Endothelial cell of umbilical vein (primary cell): ENCODE measurements at regions of chr20 and their contacts with region 1.

Region 1: GRCh38 chr20:63846128-63846798 is 15.0 kb upstream of the ABHD16B start:
- DNase-seq: no peak
- H3K4me3 ChIP-seq: no peak overlapping the region
- H3K27ac ChIP-seq: no peak overlapping the region
- H3K4me1 ChIP-seq: peaks cover 25% of the 10 kb centered on the region
- H3K27me3 ChIP-seq: no peaks in the 10 kb centered on the region
- CTCF ChIP-seq: no peak
- POLR2A ChIP-seq: no peak

Region 2: GRCh38 chr20:63664861-63665716 is 181.2 kb before region 1 on chr20:
- CTCF ChIA-PET with region 1: no interaction called
- POLR2A ChIA-PET with region 1: no interaction called
- dilution Hi-C with region 1: no loop called
- intact Hi-C with region 1: no loop called
- DNase-seq: no peak
- H3K4me3 ChIP-seq: no peak overlapping the region
- H3K27ac ChIP-seq: no peak overlapping the region
- H3K4me1 ChIP-seq: no peaks in the 10 kb centered on the region
- H3K27me3 ChIP-seq: no peaks in the 10 kb centered on the region
- CTCF ChIP-seq: no peak
- POLR2A ChIP-seq: no peak

Region 3: GRCh38 chr20:63831696-63832686 is 14.3 kb before region 1 on chr20:
- CTCF ChIA-PET with region 1: interaction called, 3 read pairs
- POLR2A ChIA-PET with region 1: no interaction called
- dilution Hi-C with region 1: no loop called
- intact Hi-C with region 1: loop called (anchors 1 kb)
- DNase-seq: no peak
- H3K4me3 ChIP-seq: peak overlapping the region in 2 of 3 experiments; percentile 9 to 36
- H3K27ac ChIP-seq: no peak overlapping the region
- H3K4me1 ChIP-seq: peaks cover 7% of the 10 kb centered on the region
- H3K27me3 ChIP-seq: peaks cover 16 to 32% of the 10 kb centered on the region in 2 experiments
- CTCF ChIP-seq: no peak
- POLR2A ChIP-seq: no peak

Region 4: DNA sequence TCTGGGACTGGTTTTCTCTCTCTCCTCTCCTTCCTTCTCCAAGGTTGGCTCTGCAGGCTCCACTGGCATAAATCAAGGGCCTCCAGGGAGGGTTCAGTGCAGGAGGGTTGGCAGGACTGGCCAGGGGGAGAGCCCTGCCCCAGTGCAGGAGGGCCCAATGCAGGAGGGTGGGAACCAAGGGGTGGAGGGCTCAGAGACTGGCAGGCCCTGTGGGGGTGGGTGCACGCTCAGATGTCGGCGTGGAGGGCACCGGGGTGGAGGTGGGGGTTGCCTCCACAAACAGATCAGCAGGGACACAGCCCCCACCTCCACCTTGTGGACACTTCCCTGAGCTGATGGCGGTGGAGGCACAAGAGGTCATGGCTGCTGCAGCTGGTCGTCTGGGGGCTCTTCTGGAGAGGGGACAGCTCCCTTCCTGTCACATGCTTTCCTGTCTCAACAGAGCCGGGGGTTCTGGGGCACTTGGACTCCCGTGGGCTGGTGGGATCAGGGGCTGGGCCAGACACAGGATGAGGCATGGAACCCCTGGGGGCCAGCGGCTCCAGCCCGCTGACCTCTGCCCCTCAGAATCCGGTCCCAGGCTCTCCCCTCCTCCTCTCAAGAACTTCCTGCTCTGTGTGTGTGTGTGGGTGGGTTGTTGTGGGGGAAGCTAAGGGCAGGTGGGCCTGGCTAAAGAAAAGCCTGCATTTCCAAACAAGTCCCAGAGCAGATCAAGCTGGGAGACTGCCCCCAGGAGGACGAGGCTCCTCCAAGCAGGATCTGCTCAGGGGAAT is 12.3 kb after region 1 on chr20:
- CTCF ChIA-PET with region 1: interaction called, 16 read pairs
- POLR2A ChIA-PET with region 1: no interaction called
- dilution Hi-C with region 1: no loop called
- intact Hi-C with region 1: no loop called
- DNase-seq: peak; percentile 72
- H3K4me3 ChIP-seq: no peak overlapping the region
- H3K27ac ChIP-seq: no peak overlapping the region
- H3K4me1 ChIP-seq: peaks cover 25% of the 10 kb centered on the region
- H3K27me3 ChIP-seq: peaks cover 0 to 5% of the 10 kb centered on the region in 2 experiments
- CTCF ChIP-seq: peak; percentile 24 to 62
- POLR2A ChIP-seq: no peak

Region 5: DNA sequence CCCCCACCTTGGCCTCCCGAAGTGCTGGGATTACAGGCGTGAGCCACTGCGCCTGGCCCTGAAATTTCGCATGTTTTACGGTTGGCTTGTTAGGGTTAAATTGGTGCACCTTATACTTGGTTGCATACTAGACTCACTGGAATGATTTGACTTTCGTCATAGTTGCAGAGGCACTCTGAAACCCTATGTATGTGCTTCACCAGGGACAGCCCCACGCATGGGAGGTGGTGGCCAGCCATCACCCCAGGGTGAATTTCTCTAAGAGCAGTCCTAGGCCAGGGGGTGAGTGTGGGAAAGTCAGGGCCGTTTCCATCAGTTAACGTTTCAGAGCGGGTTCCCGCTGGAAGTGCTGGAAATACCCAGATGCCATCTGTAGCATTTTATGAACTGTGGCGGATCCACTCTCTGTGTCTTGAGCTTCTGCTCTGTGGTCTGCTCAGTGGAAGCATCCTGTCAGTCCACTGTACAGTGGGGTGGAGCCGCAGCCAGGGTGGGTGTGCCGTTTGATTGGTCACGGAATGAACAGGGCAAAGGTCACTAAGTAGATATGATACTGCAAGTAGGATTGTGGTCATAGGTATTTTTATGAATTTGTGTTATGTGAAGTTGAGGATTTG is 61.9 kb after region 1 on chr20:
- CTCF ChIA-PET with region 1: no interaction called
- POLR2A ChIA-PET with region 1: no interaction called
- dilution Hi-C with region 1: no loop called
- intact Hi-C with region 1: no loop called
- DNase-seq: no peak
- H3K4me3 ChIP-seq: no peak overlapping the region
- H3K27ac ChIP-seq: no peak overlapping the region
- H3K4me1 ChIP-seq: no peaks in the 10 kb centered on the region
- H3K27me3 ChIP-seq: no peaks in the 10 kb centered on the region
- CTCF ChIP-seq: no peak
- POLR2A ChIP-seq: no peak

Region 6: DNA sequence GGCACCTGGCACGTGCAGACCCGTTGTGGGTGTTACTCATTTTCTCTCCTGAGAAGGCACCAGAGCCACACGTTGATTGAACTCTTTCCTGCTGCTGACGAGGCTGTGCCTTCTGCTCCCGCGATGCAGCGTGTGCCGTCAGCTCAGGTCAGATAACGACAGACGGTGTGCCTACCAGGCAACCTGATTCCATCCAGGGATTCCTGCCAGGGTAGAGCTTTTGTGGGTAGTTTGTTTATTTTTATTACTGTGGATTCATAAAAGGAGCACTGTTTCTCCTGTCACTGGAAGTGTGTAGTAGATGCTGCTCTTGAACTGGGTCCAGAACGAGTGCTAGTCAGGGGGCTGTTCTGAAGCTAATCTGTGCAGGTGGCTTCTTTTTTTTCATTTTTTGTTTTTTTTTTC is 155.3 kb after region 1 on chr20:
- CTCF ChIA-PET with region 1: no interaction called
- POLR2A ChIA-PET with region 1: no interaction called
- dilution Hi-C with region 1: no loop called
- intact Hi-C with region 1: no loop called
- DNase-seq: no peak
- H3K4me3 ChIP-seq: no peak overlapping the region
- H3K27ac ChIP-seq: no peak overlapping the region
- H3K4me1 ChIP-seq: no peaks in the 10 kb centered on the region
- H3K27me3 ChIP-seq: no peaks in the 10 kb centered on the region
- CTCF ChIP-seq: no peak
- POLR2A ChIP-seq: no peak